GM23248 (cell line): ENCODE measurements at regions of chr18 and their contacts with region 1.

Region 1: DNA sequence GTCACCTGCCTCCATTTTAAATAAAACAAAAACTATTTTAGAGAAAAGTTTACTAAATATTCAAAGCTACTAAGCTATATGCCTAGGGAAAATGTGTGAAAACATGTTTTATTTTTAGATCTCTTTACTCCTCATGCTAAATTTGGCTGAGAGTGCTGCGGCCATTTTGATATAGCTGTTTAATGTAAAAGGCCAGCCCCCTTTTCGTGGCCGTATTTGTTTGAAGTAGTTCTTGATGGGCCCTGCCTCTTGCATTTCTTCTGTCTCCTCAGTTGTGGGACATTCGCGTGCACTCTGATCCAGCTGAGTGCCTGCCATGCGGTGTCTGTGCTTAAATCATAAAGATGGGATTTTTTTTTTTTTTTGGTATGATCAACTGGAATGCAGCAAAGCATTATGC is 64.0 kb downstream of the ZNF407 start:
- DNase-seq: no peak
- H3K4me3 ChIP-seq: no peak overlapping the region
- H3K27ac ChIP-seq: no peak overlapping the region
- H3K4me1 ChIP-seq: no peaks in the 10 kb centered on the region
- H3K27me3 ChIP-seq: no peaks in the 10 kb centered on the region

Region 2: GRCh38 chr18:74446631-74447403 is 214.9 kb before region 1 on chr18:
- in situ Hi-C with region 1: no loop called
- DNase-seq: no peak
- H3K4me3 ChIP-seq: no peak overlapping the region
- H3K27ac ChIP-seq: no peak overlapping the region
- H3K4me1 ChIP-seq: no peaks in the 10 kb centered on the region
- H3K27me3 ChIP-seq: 0 out of 2 replicates have a peak, but pooled peaks cover 16% of the 10 kb centered on the region

Region 3: GRCh38 chr18:74963820-74964446 is 302.2 kb after region 1 on chr18:
- in situ Hi-C with region 1: loop called (anchors 10 kb)
- DNase-seq: peak; percentile 67
- H3K4me3 ChIP-seq: no peak overlapping the region
- H3K27ac ChIP-seq: no peak overlapping the region
- H3K4me1 ChIP-seq: peaks cover 8% of the 10 kb centered on the region; the same call in 1 of the 2 replicates
- H3K27me3 ChIP-seq: no peaks in the 10 kb centered on the region

Region 4: DNA sequence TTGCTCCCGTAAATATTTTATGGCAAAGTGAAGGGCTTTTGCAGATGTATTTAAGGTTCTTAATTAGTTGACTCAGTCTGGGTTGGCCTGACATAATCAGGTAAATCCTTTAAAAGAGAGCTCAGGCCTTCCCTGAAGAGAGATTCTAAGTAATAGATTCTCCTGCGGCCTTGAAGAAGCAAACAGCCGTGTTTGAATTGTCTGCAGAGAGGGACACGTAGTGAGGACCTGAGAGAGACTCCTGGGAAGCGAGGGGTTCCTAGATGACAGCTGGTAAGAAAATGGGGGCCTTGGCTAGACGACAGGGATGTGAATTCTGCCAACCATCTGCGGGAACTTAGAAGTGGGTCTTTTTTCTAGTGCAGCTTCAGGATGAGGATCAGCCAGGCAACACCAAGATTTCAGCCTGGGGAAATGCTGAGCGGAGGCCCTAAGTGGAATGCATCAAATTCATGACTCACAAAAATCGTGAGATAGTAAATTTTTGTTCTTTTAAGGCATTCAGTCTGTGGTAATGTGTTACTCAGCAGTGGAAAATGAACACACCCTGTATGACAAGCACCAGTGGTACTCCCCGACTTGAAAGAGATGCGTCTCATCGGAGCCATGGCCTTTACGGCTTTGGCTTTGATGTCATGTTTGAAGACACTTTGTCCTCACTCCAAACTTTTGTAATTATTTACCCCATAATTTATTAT is 828.0 kb after region 1 on chr18:
- in situ Hi-C with region 1: loop called (anchors 10 kb)
- DNase-seq: peak; percentile 96
- H3K4me3 ChIP-seq: peak overlapping the region; percentile 36
- H3K27ac ChIP-seq: peak overlapping the region; percentile 97
- H3K4me1 ChIP-seq: peaks cover 30% of the 10 kb centered on the region
- H3K27me3 ChIP-seq: no peaks in the 10 kb centered on the region